ENCODE measurements at regions of chr2 and their contacts with region 1.

Region 1: DNA sequence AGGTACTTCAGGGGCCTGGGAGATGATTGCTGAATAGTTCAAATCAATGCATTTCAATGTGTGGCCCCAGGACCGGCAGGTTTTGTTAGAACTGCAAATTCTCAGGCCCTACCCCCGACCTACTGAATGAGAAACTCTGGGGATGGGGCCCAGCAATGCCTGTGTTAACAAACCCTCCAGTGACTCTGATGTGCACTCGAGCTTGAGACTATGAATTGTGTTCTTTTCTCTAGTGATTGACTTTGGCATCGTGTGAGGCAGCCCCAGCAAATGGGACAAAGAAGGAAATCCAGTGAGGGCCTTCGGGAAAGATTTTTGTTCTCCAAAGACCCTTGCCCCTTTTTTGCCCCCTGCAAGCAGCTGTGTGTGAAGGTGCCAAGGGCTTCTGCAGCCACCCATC is 22.4 kb downstream of the ALK start:
- DNase-seq: no peak
- H3K4me3 ChIP-seq: no peak overlapping the region
- H3K27ac ChIP-seq: no peak overlapping the region
- H3K4me1 ChIP-seq: peaks cover 11% of the 10 kb centered on the region
- H3K27me3 ChIP-seq: no peaks in the 10 kb centered on the region
- CTCF ChIP-seq: no peak

Region 2: GRCh38 chr2:28716265-28716867 is 1182.6 kb before region 1 on chr2:
- CTCF ChIA-PET with region 1: no interaction called
- POLR2A ChIA-PET with region 1: no interaction called
- intact Hi-C with region 1: no loop called
- DNase-seq: peak; percentile 88
- H3K4me3 ChIP-seq: no peak overlapping the region
- H3K27ac ChIP-seq: peak overlapping the region; percentile 63
- H3K4me1 ChIP-seq: peaks cover 17% of the 10 kb centered on the region
- H3K27me3 ChIP-seq: no peaks in the 10 kb centered on the region
- CTCF ChIP-seq: no peak

Region 3: DNA sequence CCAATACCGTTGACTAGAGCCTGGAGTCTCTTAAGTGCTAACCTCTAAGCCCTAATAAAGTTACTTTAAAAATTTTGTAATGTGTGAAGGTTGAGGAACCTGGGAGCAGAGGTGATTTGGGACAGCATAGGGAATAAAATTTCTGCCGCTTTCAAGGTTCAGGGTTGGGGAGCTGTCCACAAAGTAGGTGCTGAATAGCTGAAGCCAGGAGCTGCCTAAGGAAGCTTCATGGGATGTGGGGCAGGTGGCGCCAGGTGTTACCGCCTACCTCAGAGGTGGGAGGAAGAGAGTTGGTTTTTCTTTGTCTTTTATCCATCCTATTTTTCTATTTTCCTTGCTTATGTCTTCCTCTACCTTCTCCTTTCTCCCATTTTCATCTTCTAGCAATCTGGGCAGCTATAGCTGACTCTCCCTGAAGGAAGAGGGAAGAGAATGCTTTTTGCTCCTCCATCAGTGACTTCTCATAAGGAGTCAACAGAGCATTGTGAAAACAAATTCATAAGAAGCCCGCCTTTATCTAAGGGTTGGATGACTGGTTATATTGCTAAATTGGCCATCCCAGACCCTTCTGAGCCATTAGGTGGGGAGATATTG is 605.1 kb before region 1 on chr2:
- CTCF ChIA-PET with region 1: no interaction called
- POLR2A ChIA-PET with region 1: no interaction called
- intact Hi-C with region 1: no loop called
- DNase-seq: no peak
- H3K4me3 ChIP-seq: no peak overlapping the region
- H3K27ac ChIP-seq: no peak overlapping the region
- H3K4me1 ChIP-seq: no peaks in the 10 kb centered on the region
- H3K27me3 ChIP-seq: no peaks in the 10 kb centered on the region
- CTCF ChIP-seq: no peak

Region 4: DNA sequence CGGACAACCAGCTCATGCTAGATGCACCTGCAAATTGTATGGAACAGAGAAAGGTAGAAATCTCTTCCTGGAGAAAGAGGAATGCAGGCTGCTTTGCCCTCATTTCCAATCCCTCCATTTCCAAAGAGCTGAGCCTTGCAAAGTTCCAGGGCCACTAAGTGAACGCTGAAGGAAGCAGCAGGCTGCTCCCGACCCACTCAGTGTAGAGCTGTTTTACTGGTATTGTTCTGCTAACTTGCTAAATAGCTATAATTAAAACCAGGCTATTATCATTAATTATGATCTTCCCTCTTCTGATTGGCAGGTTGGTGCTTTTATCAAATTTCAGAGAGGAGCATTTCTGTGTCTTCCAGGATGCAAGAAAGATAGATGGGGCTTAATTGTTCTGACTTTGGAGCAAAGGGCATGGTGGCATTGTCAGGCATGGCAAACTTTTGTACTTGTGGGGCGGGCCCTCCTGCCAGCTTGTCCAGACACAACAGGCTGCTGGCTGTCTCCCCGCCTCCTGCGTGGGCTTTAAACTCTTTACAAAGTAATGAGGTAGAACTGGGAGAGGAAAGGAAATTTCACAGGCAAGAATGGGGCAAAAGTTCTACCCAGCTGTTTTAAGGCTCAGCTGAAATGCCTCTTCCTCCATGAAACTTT is 17.8 kb before region 1 on chr2:
- CTCF ChIA-PET with region 1: interaction called, 13 read pairs
- POLR2A ChIA-PET with region 1: no interaction called
- intact Hi-C with region 1: no loop called
- DNase-seq: peak; percentile 41
- H3K4me3 ChIP-seq: no peak overlapping the region
- H3K27ac ChIP-seq: no peak overlapping the region
- H3K4me1 ChIP-seq: peaks cover 7% of the 10 kb centered on the region
- H3K27me3 ChIP-seq: no peaks in the 10 kb centered on the region
- CTCF ChIP-seq: no peak

Measured in A673 (cell line).